Spleen (tissue), 13 donors: ENCODE measurements at regions of chr7 and their contacts with region 1.

Region 1: GRCh38 chr7:127359011-127359410 is 33.5 kb downstream of the ZNF800 start:
- DNase-seq: no peak
- H3K4me3 ChIP-seq: no peak overlapping the region
- H3K27ac ChIP-seq: no peak overlapping the region
- H3K4me1 ChIP-seq: no peaks in the 10 kb centered on the region
- H3K27me3 ChIP-seq: no peaks in the 10 kb centered on the region
- CTCF ChIP-seq: no peak
- POLR2A ChIP-seq: no peak

Region 2: DNA sequence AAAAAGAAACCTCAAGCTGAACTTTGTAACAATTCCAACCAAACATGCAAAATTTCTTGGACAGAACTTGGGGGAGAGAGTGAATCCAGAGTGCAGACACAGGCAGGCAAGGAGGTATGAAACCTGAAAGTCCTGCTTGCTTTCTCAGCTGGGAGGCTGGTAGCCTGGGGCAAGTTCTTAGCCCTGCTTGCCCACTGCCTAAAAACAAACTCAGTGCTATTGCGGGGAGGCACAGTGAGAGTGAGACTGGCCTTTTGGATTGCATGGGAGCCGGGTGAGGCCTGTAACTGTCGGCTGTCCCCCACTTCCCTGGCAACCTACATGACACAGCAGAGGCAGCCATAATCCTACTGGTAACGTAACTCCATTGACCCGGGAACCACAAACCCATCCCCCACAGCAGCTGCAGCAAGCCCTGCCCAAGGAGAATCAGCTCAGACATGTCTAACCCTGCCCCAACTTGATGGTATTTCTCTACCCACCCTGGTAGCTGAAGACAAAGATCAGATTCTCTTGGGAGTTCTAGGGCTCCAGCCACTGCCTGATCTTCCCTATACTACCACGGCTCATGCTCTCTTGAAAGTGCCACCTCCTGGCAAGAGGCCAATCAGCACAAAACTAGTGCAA is 769.8 kb before region 1 on chr7:
- intact Hi-C with region 1: no loop called
- DNase-seq: no peak
- H3K4me3 ChIP-seq: no peak overlapping the region
- H3K27ac ChIP-seq: no peak overlapping the region
- H3K4me1 ChIP-seq: no peaks in the 10 kb centered on the region
- H3K27me3 ChIP-seq: no peaks in the 10 kb centered on the region
- CTCF ChIP-seq: no peak
- POLR2A ChIP-seq: no peak

Region 3: DNA sequence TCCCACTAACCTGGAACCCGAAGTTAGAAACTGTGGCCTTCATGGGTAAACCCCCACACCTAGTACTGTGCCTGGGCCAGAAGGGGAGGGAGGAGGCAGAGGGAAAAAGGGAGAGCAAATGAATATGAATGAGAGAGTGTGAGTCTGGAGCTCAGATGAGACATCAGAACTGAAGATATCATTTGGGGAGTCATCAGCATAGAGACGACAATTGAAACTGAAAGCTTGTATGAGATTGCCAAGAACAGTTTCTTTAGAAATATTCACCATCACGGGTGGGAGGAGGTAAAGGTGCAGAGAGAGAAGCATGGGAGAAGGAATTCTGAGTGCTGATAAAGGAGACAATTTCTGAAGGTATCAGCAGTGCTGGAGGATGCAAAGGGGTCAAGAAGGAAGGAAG is 277.5 kb before region 1 on chr7:
- intact Hi-C with region 1: no loop called
- DNase-seq: no peak
- H3K4me3 ChIP-seq: no peak overlapping the region
- H3K27ac ChIP-seq: no peak overlapping the region
- H3K4me1 ChIP-seq: no peaks in the 10 kb centered on the region
- H3K27me3 ChIP-seq: no peaks in the 10 kb centered on the region
- CTCF ChIP-seq: no peak
- POLR2A ChIP-seq: no peak

Region 4: GRCh38 chr7:127304087-127304486 is 54.9 kb before region 1 on chr7:
- intact Hi-C with region 1: no loop called
- DNase-seq: no peak
- H3K4me3 ChIP-seq: no peak overlapping the region
- H3K27ac ChIP-seq: no peak overlapping the region
- H3K4me1 ChIP-seq: no peaks in the 10 kb centered on the region
- H3K27me3 ChIP-seq: peaks cover 0 to 8% (median 0%) of the 10 kb centered on the region in 7 donors
- CTCF ChIP-seq: no peak
- POLR2A ChIP-seq: no peak

Region 5: DNA sequence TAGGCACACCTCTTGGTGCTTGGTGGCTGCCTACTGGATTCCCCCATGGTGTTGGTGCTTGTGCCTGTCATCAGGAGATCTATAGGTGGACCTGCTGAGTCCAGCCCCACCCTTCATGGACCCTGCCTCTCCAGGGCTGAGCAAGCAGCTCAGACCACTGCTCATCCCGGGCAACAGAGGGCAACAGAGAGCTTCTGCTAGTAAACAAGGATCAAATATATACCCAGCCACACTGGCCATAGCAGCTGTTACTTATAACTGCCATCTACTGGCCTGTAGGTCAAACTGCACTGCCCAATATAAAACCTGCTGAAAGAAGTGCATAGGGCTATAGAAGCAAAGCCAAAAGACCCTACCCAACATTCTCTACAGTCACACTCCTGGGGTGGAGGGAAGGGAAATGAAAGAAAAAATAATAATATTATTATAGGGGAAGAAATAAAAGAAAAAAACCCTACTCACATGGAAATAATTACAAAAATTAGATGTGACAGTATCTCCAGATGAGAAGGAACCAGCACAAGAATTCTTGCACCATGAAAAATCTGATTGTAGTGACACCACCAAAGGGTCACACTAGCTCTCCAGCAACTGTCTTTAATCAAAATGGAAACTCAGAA is 88.4 kb after region 1 on chr7:
- intact Hi-C with region 1: loop called (anchors 10 kb)
- DNase-seq: peak; percentile 83
- H3K4me3 ChIP-seq: no peak overlapping the region
- H3K27ac ChIP-seq: no peak overlapping the region
- H3K4me1 ChIP-seq: no peaks in the 10 kb centered on the region
- H3K27me3 ChIP-seq: peaks cover 0 to 19% (median 4%) of the 10 kb centered on the region in 7 donors
- CTCF ChIP-seq: peak; percentile 62 to 81 (median 75)
- POLR2A ChIP-seq: no peak

Region 6: GRCh38 chr7:127667017-127667670 is 308.1 kb after region 1 on chr7:
- intact Hi-C with region 1: no loop called
- DNase-seq: no peak
- H3K4me3 ChIP-seq: no peak overlapping the region
- H3K27ac ChIP-seq: peak overlapping the region in 1 of 8 donors; percentile 26
- H3K4me1 ChIP-seq: peaks cover 0 to 35% (median 15%) of the 10 kb centered on the region in 6 donors
- H3K27me3 ChIP-seq: no peaks in the 10 kb centered on the region
- CTCF ChIP-seq: no peak
- POLR2A ChIP-seq: no peak